Stomach (tissue), 19 donors: ENCODE measurements at regions of chr20 and their contacts with region 1.

Region 1: GRCh38 chr20:34955232-34956040 is at the starts of genes GSS and MYH7B:
- DNase-seq: peak; percentile 99 to 100
- H3K4me3 ChIP-seq: peak within 1 kb of the TSS; percentile 58 to 65 (median 62)
- H3K27ac ChIP-seq: peak within 1 kb of the TSS; percentile 88 to 94 (median 92)
- H3K4me1 ChIP-seq: peaks cover 9 to 32% (median 24%) of the 10 kb centered on the region in 4 donors
- H3K27me3 ChIP-seq: no peaks in the 10 kb centered on the region
- CTCF ChIP-seq: peak in 5 of 7 experiments; percentile 33 to 97 (median 72)
- EP300 ChIP-seq: no peak
- POLR2A ChIP-seq: peak in 2 of 4 donors; percentile 33 to 47
- total RNA-seq, gene GSS: 18.1 to 199 (median 54.6) TPM
- total RNA-seq, gene MYH7B: 0.45 to 1.5 (median 0.58) TPM in 3 of 5 donors, not detected in the others

Region 2: DNA sequence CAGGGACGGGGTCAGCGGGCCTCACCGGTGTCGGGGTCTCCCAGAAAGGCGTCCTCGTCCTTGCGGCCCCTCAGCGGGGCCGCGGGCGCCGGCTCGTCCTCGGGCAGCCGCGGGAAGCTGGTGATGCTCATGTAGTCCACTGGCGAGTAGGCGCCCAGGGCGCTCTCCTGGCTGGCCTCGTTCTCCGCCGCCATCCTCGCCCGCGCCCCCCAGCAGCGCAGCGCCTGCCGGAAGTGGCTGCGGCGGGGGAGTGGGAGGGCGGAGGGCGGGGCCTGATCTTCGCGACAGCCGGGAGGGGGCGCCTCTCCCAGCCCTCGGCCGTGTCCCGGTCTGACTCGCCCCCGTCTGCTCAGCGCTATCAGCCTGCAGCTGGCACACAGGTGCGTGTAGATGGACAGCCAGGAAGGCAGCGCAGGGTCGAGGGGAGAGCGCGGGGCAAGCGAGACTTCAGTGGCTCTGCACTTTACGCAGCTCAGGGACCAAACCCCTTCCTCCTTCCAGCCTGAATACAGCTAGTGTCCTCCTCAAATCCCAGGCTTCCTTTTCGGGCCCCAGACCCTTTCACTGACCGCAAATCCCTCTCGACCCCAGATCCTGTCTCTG is 82.7 kb before region 1 on chr20 and contains the start of gene GGT7:
- intact Hi-C with region 1: loop called (anchors 5 kb)
- DNase-seq: peak; percentile 89 to 94
- H3K4me3 ChIP-seq: peak within 1 kb of the TSS; percentile 56 to 82 (median 74)
- H3K27ac ChIP-seq: peak within 1 kb of the TSS; percentile 54 to 92 (median 68)
- H3K4me1 ChIP-seq: peaks cover 26 to 60% (median 58%) of the 10 kb centered on the region in 4 donors
- H3K27me3 ChIP-seq: no peaks in the 10 kb centered on the region
- CTCF ChIP-seq: peak in 5 of 7 experiments; percentile 32 to 85 (median 69)
- EP300 ChIP-seq: no peak
- POLR2A ChIP-seq: no peak
- total RNA-seq, gene GGT7: 10.5 to 29.0 (median 19.2) TPM